ENCODE measurements at regions of chr6 and their contacts with region 1.

Region 1: GRCh38 chr6:158207422-158207788 is 39.3 kb downstream of the GTF2H5 start:
- H3K4me3 ChIP-seq: no peak overlapping the region
- H3K27ac ChIP-seq: no peak overlapping the region
- H3K4me1 ChIP-seq: no peaks in the 10 kb centered on the region
- CTCF ChIP-seq: no peak

Region 2: GRCh38 chr6:158143700-158144099 is 63.7 kb before region 1 on chr6:
- CTCF ChIA-PET with region 1: interaction called, 39 read pairs
- POLR2A ChIA-PET with region 1: no interaction called
- H3K4me3 ChIP-seq: no peak overlapping the region
- H3K27ac ChIP-seq: no peak overlapping the region
- H3K4me1 ChIP-seq: no peaks in the 10 kb centered on the region
- CTCF ChIP-seq: no peak

Region 3: GRCh38 chr6:158185729-158186456 is 21.5 kb before region 1 on chr6:
- CTCF ChIA-PET with region 1: interaction called, 37 read pairs
- POLR2A ChIA-PET with region 1: no interaction called
- H3K4me3 ChIP-seq: no peak overlapping the region
- H3K27ac ChIP-seq: no peak overlapping the region
- H3K4me1 ChIP-seq: no peaks in the 10 kb centered on the region
- CTCF ChIP-seq: no peak

Region 4: GRCh38 chr6:158231551-158232315 is 24.3 kb after region 1 on chr6:
- CTCF ChIA-PET with region 1: interaction called, 10 read pairs
- POLR2A ChIA-PET with region 1: no interaction called
- H3K4me3 ChIP-seq: peak overlapping the region; percentile 79
- H3K27ac ChIP-seq: peak overlapping the region; percentile 89
- H3K4me1 ChIP-seq: peaks cover 8% of the 10 kb centered on the region; the same call in 1 of the 2 replicates
- CTCF ChIP-seq: no peak

Measured in HEK293 (cell line).